MCF 10A (cell line): ENCODE measurements at regions of chr1 and their contacts with region 1.

Region 1: GRCh38 chr1:152654110-152654509 is 9.1 kb upstream of the LCE2D start:
- DNase-seq: peak; percentile 91
- H3K4me3 Mint-ChIP-seq: no peak overlapping the region
- H3K27ac Mint-ChIP-seq: no peak overlapping the region
- H3K4me1 Mint-ChIP-seq: no peaks in the 10 kb centered on the region
- H3K27me3 Mint-ChIP-seq: no peaks in the 10 kb centered on the region
- CTCF ChIP-seq: peak; percentile 87

Region 2: DNA sequence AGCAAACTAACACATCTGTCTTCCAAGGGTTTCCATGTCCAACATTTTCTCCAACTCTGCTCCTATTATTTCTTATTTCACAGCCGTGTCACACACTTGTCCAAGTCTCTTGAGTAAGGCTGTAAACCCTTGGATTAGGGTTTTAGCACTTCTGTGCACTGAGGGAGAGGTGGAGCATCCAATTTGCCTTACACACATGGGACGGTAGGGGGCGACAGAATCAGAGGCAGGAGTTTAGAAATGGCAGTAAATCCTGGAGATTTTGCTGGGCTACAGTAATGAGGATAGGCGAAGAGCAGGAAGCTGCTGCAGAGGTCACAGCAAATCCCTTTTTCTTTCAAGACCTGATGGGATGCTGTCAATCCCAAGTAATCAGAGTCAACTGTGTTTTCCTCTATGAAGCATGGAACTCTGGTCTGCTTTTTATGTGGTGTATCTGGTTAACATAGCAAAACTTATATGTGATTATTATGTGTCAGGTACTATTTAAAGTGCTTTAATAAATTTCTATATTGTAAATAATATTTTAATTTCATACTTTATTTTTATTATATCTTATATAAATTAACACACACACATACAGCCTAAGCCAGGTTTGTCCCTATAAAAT is 158.9 kb before region 1 on chr1:
- CTCF ChIA-PET with region 1: interaction called, 3 read pairs
- POLR2A ChIA-PET with region 1: no interaction called
- intact Hi-C with region 1: loop called (anchors 10 kb)
- DNase-seq: peak; percentile 78
- H3K4me3 Mint-ChIP-seq: no peak overlapping the region
- H3K27ac Mint-ChIP-seq: no peak overlapping the region
- H3K4me1 Mint-ChIP-seq: no peaks in the 10 kb centered on the region
- H3K27me3 Mint-ChIP-seq: no peaks in the 10 kb centered on the region
- CTCF ChIP-seq: peak; percentile 66

Region 3: DNA sequence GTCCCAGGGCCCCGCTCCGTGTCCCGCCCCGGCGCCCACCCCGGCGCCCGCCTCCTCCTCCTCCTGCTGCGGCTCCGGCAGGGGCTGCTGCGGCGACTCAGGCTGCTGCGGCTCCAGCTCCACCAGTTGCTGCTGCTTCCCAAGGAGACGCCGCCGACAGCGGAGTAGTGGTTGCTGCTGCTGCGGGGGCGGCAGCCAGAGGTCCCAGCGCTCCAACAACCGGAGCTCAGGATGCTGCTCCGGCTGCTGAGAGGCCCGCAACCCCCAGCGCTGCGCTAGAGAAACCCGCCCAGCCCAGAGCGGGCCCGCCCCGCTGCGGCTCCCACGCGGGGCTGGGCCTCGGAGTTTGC is 138.7 kb before region 1 on chr1:
- CTCF ChIA-PET with region 1: no interaction called
- POLR2A ChIA-PET with region 1: no interaction called
- intact Hi-C with region 1: no loop called
- DNase-seq: no peak
- H3K4me3 Mint-ChIP-seq: no peak overlapping the region
- H3K27ac Mint-ChIP-seq: no peak overlapping the region
- H3K4me1 Mint-ChIP-seq: peaks cover 15% of the 10 kb centered on the region
- H3K27me3 Mint-ChIP-seq: no peaks in the 10 kb centered on the region
- CTCF ChIP-seq: no peak

Region 4: DNA sequence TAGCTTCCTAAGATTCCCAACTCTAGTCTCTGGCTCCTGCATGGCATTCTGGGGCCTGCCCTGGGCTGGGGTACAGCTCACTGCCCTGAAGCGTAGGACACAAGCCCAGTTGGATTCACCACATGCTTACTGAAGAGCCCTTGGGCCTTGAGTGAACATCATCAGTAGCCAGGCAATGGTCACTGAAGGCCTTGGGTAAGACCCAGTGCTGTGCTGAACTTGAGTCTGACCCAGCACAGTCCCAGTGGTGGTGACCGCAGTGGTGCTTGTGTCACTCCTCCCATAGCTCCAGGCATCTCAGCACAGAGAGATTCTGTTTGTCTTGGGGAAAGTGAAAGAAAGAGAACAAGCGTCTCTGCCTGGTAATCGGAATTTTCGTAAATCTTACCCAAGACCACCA is 23.5 kb before region 1 on chr1:
- CTCF ChIA-PET with region 1: interaction called, 132 read pairs
- POLR2A ChIA-PET with region 1: interaction called, 4 read pairs
- intact Hi-C with region 1: no loop called
- DNase-seq: no peak
- H3K4me3 Mint-ChIP-seq: no peak overlapping the region
- H3K27ac Mint-ChIP-seq: no peak overlapping the region
- H3K4me1 Mint-ChIP-seq: no peaks in the 10 kb centered on the region
- H3K27me3 Mint-ChIP-seq: no peaks in the 10 kb centered on the region
- CTCF ChIP-seq: no peak

Region 5: GRCh38 chr1:152735648-152736047 is 81.5 kb after region 1 on chr1:
- CTCF ChIA-PET with region 1: interaction called, 64 read pairs
- POLR2A ChIA-PET with region 1: no interaction called
- intact Hi-C with region 1: loop called (anchors 1 kb)
- DNase-seq: peak; percentile 60
- H3K4me3 Mint-ChIP-seq: no peak overlapping the region
- H3K27ac Mint-ChIP-seq: no peak overlapping the region
- H3K4me1 Mint-ChIP-seq: peaks cover 11% of the 10 kb centered on the region
- H3K27me3 Mint-ChIP-seq: no peaks in the 10 kb centered on the region
- CTCF ChIP-seq: peak; percentile 67

Region 6: GRCh38 chr1:152761356-152762213 is 107.5 kb after region 1 on chr1:
- CTCF ChIA-PET with region 1: interaction called, 57 read pairs
- POLR2A ChIA-PET with region 1: interaction called, 5 read pairs
- intact Hi-C with region 1: loop called (anchors 1 kb)
- DNase-seq: no peak
- H3K4me3 Mint-ChIP-seq: peak overlapping the region; percentile 0
- H3K27ac Mint-ChIP-seq: peak overlapping the region; percentile 4
- H3K4me1 Mint-ChIP-seq: peaks cover 41% of the 10 kb centered on the region
- H3K27me3 Mint-ChIP-seq: no peaks in the 10 kb centered on the region
- CTCF ChIP-seq: peak; percentile 10

Region 7: DNA sequence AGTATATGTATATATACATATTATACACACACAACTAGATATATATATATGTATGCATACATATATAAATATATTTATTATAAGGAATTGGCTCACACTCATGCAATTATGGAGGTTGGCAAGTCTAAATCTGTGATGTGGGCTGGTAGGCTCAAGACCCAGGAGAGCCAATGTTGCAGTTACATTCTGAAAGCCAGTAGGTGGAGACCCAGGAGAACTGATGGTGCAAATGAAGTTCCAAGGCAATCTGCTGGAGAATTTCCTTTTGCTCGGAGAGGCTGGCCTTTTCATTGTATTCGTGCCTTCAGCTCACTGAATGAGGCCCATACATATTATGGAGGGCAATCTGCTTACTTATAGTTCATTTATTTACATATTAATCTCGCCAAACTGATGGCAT is 263.7 kb after region 1 on chr1:
- CTCF ChIA-PET with region 1: interaction called, 12 read pairs
- POLR2A ChIA-PET with region 1: no interaction called
- intact Hi-C with region 1: no loop called
- DNase-seq: peak; percentile 37
- H3K4me3 Mint-ChIP-seq: no peak overlapping the region
- H3K27ac Mint-ChIP-seq: no peak overlapping the region
- H3K4me1 Mint-ChIP-seq: peaks cover 8% of the 10 kb centered on the region
- H3K27me3 Mint-ChIP-seq: no peaks in the 10 kb centered on the region
- CTCF ChIP-seq: peak; percentile 40

Region 8: GRCh38 chr1:153220606-153221303 is 566.6 kb after region 1 on chr1:
- CTCF ChIA-PET with region 1: interaction called, 13 read pairs
- POLR2A ChIA-PET with region 1: no interaction called
- intact Hi-C with region 1: loop called (anchors 1 kb)
- DNase-seq: no peak
- H3K4me3 Mint-ChIP-seq: no peak overlapping the region
- H3K27ac Mint-ChIP-seq: no peak overlapping the region
- H3K4me1 Mint-ChIP-seq: peaks cover 7% of the 10 kb centered on the region
- H3K27me3 Mint-ChIP-seq: peaks cover 23% of the 10 kb centered on the region
- CTCF ChIP-seq: no peak